ENCODE measurements at regions of chr2 and their contacts with region 1.

Region 1: DNA sequence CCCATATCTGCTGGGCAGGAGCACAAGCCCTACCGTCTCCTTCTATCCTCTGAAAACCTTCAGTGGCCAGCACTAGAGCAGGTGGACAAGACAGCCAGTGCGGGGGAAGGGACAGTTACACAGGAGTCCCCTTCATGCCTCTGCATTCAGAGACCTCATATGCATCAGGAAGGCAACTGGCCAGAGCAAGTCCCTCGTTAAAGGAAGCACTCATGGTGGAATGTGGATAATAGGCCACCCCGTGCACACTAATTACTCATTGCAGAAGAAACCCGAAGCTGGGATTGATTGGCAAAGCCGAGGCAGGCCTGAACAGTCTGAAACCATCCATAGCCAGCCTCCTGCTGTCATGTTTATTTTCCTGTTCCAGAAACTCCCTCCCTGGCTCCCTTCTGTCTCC is 11.2 kb downstream of the KIAA2012 start:
- DNase-seq: no peak
- ATAC-seq: no peak
- H3K4me3 ChIP-seq: no peak overlapping the region
- H3K27ac ChIP-seq: no peak overlapping the region
- H3K4me1 ChIP-seq: no peaks in the 10 kb centered on the region
- H3K27me3 ChIP-seq: no peaks in the 10 kb centered on the region
- CTCF ChIP-seq: no peak

Region 2: GRCh38 chr2:202135091-202135874 is 51.0 kb after region 1 on chr2:
- CTCF ChIA-PET with region 1: no interaction called
- POLR2A ChIA-PET with region 1: no interaction called
- in situ Hi-C with region 1: no loop called
- intact Hi-C with region 1: no loop called
- DNase-seq: no peak
- ATAC-seq: peak; percentile 58
- H3K4me3 ChIP-seq: no peak overlapping the region
- H3K27ac ChIP-seq: no peak overlapping the region
- H3K4me1 ChIP-seq: peaks cover 4% of the 10 kb centered on the region; the same call in 1 of the 2 replicates
- H3K27me3 ChIP-seq: no peaks in the 10 kb centered on the region
- CTCF ChIP-seq: no peak

Region 3: GRCh38 chr2:202193881-202194353 is 109.7 kb after region 1 on chr2:
- CTCF ChIA-PET with region 1: no interaction called
- POLR2A ChIA-PET with region 1: interaction called, 13 read pairs
- in situ Hi-C with region 1: no loop called
- intact Hi-C with region 1: no loop called
- DNase-seq: no peak
- ATAC-seq: no peak
- H3K4me3 ChIP-seq: no peak overlapping the region
- H3K27ac ChIP-seq: no peak overlapping the region
- H3K4me1 ChIP-seq: no peaks in the 10 kb centered on the region
- H3K27me3 ChIP-seq: no peaks in the 10 kb centered on the region
- CTCF ChIP-seq: no peak